ENCODE measurements at regions of chr17 and their contacts with region 1.

Region 1: GRCh38 chr17:69809331-69809730 is 265.7 kb upstream of the KCNJ16 start:
- DNase-seq: no peak
- ATAC-seq: no peak
- H3K4me3 ChIP-seq: no peak overlapping the region
- H3K27ac ChIP-seq: no peak overlapping the region
- H3K4me1 ChIP-seq: no peaks in the 10 kb centered on the region
- H3K27me3 ChIP-seq: no peaks in the 10 kb centered on the region
- CTCF ChIP-seq: no peak
- POLR2A ChIP-seq: no peak

Region 2: GRCh38 chr17:69773081-69773480 is 36.2 kb before region 1 on chr17:
- in situ Hi-C with region 1: no loop called
- intact Hi-C with region 1: loop called (anchors 1 kb)
- DNase-seq: no peak
- ATAC-seq: no peak
- H3K4me3 ChIP-seq: no peak overlapping the region
- H3K27ac ChIP-seq: no peak overlapping the region
- H3K4me1 ChIP-seq: peaks cover 0 to 12% of the 10 kb centered on the region in 2 donors
- H3K27me3 ChIP-seq: no peaks in the 10 kb centered on the region
- CTCF ChIP-seq: no peak
- POLR2A ChIP-seq: no peak